Tibial artery (tissue), 4 donors: ENCODE measurements at regions of chr5 and their contacts with region 1.

Region 1: DNA sequence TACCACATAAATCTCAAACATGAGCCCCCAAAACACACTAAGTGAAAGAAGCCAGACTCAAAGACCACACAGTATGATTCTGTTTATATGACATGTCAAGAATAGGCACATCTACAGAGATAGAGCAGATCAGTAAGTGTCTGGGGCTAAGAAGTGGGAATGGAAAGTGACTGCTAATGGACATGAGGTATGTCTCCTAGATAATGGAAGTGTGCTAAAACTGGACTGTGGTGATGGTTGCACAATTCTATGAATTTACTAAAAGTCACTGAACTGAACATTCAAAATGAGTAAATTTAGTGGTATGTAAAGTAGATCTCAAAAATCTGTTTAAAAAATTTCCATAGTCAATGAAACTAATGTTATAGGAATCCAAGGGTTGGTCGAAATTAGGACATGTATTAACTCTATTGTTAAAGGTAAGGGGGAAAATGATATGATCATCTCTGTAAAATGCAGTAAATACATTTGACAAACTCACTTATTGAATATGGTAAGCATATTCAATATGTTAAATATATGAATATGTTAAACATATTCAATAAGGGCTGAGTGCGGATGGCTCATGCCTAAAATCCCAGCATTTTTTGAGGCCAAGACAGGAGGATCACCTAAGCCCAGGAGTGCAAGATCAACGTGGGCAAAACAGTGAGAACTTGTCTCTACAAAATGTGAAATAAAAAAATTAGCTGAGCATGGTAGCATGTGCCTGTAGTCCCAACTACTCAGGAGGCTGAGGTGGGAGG is 51.7 kb downstream of the NUP155 start:
- DNase-seq: no peak
- H3K4me3 ChIP-seq: no peak overlapping the region
- H3K27ac ChIP-seq: no peak overlapping the region
- H3K4me1 ChIP-seq: no peaks in the 10 kb centered on the region
- H3K27me3 ChIP-seq: no peaks in the 10 kb centered on the region
- CTCF ChIP-seq: no peak

Region 2: DNA sequence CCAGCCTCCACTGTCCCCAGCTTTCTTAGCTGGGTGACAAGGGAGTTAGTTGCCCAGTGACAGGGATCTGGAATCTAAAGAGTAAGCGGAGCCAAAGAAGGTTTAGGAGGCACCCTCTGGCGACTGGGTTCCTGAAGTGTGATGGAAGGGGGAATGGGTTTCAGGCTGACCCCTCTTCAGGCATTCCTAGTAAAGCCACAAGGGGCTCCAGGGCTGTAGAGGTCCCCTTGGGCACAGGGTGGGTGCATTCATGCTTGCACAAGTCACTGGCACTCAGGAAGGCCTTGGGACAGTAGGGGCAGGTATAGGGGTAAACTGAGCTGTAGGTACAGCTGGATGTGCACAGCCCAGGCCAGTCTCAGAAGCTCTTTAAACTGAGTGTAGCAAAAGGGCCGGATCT is 144.3 kb before region 1 on chr5:
- intact Hi-C with region 1: loop called (anchors 10 kb)
- DNase-seq: no peak
- H3K4me3 ChIP-seq: no peak overlapping the region
- H3K27ac ChIP-seq: no peak overlapping the region
- H3K4me1 ChIP-seq: no peaks in the 10 kb centered on the region
- H3K27me3 ChIP-seq: no peaks in the 10 kb centered on the region
- CTCF ChIP-seq: no peak